ENCODE measurements at regions of chr14 and their contacts with region 1.

Region 1: DNA sequence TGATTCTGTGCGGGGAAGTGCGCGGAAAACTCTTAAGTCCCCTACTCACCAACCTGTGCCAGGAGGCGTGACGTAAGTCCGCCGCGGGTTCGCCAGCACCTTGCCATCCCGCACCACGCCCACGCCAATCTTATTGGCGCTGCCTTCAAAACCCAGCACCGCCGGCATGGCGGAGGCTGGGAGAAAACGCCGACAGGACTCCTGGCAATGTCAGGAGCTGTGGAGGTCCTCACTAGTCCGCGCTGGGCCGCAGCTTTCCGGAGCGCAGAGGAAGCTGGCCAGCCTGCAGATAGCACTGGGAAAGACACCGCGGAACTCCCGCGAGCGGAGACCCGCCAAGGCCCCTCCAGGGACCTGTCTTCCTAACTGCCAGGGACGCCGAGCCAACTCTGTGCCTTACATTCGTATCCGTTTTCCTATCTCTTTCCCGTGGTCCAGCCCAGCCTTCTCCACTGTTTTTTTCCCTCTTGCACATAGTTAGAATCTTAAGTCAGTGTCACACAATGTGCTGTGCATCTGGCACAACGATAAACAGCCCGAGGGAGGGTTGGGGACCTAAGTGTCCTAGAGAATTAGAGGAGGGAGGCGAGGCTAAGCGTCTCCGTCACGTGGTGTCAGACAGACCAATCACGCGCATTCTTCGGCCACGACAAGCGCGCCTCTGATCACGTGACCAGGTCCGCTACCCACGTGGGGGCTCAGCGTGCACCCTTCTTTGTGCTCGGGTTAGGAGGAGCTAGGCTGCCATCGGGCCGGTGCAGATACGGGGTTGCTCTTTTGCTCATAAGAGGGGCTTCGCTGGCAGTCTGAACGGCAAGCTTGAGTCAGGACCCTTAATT is at the starts of genes APEX1 and OSGEP:
- DNase-seq: peak; percentile 93 to 95
- H3K4me3 ChIP-seq: peak within 1 kb of the TSS; percentile 86 to 95 (median 90)
- H3K27ac ChIP-seq: peak within 1 kb of the TSS; percentile 99
- H3K4me1 ChIP-seq: peaks cover 0 to 10% (median 1%) of the 10 kb centered on the region in 4 experiments; a peak in 4 of 7 replicates
- H3K27me3 ChIP-seq: no peaks in the 10 kb centered on the region
- CTCF ChIP-seq: no peak; a peak in 1 of 4 replicates
- EP300 ChIP-seq: no peak
- POLR2A ChIP-seq: peak; percentile 95 to 96
- RAD21 ChIP-seq: peak; percentile 5 to 13; a peak in 2 of 4 replicates
- total RNA-seq, gene APEX1: 384 and 404 TPM in 2 replicates
- total RNA-seq, gene OSGEP: 34.4 and 42.3 TPM in 2 replicates

Region 2: GRCh38 chr14:20327005-20327869 is 127.5 kb before region 1 on chr14:
- CTCF ChIA-PET with region 1: interaction called, 5 read pairs
- POLR2A ChIA-PET with region 1: interaction called, 16 read pairs
- DNase-seq: no peak
- H3K4me3 ChIP-seq: no peak overlapping the region
- H3K27ac ChIP-seq: no peak overlapping the region
- H3K4me1 ChIP-seq: peaks cover 0 to 3% (median 0%) of the 10 kb centered on the region in 4 experiments; a peak in 3 of 7 replicates
- H3K27me3 ChIP-seq: no peaks in the 10 kb centered on the region
- CTCF ChIP-seq: peak in 2 of 3 experiments; percentile 20 to 62; a peak in 2 of 4 replicates
- EP300 ChIP-seq: no peak
- POLR2A ChIP-seq: peak in 1 of 2 experiments; percentile 37; a peak in 1 of 3 replicates
- RAD21 ChIP-seq: peak; percentile 53 to 57

Region 3: DNA sequence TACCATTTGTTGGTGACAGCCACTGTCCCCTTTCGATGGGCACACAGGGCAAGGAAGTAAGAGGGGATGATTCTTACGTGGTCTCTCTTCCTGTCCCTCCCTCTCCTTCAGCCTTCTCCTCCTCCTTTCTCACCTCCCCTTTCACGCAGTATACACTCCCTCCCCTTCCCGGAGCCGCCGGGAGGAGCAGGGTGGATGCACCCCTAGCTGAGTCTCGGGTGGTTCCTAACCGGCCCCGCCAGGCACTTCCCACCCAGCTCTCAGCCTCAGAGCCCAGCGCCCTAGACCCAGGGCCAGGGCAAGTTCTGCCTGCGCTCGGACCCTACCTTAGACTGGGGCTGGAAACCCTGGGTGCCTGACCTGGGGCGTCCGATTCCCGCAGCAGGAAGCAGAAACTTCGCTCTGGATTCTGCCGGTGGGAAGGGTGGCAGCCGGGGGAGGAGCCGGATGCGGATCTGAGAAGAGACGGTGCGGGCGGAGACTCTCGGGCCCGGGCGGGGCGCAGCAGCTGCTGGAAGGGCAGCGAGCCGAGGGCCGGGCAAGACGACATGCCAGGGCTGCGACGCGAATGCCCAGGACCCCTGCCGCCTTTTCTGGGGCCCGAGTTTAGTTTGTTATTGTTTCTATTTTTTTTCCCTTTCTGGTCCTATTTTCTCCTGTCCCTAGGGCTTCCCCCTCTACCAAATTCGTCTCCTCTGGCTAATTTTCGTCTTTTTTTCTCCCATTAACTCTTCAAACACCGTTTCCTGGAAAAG is 41.5 kb before region 1 on chr14 and contains the start of gene TEP1:
- CTCF ChIA-PET with region 1: interaction called, 9 read pairs
- POLR2A ChIA-PET with region 1: interaction called, 23 read pairs
- DNase-seq: peak; percentile 31 to 83
- H3K4me3 ChIP-seq: peak within 1 kb of the TSS; percentile 91 to 97 (median 92)
- H3K27ac ChIP-seq: no peak within 1 kb of the TSS; the same call in 1 of the 2 replicates
- H3K4me1 ChIP-seq: peaks cover 0 to 5% (median 3%) of the 10 kb centered on the region in 4 experiments; a peak in 3 of 7 replicates
- H3K27me3 ChIP-seq: no peaks in the 10 kb centered on the region
- CTCF ChIP-seq: no peak
- EP300 ChIP-seq: no peak
- POLR2A ChIP-seq: peak in 1 of 2 experiments; percentile 57; a peak in 1 of 3 replicates
- RAD21 ChIP-seq: no peak
- total RNA-seq, gene TEP1: 9.6 and 10.7 TPM in 2 replicates

Region 4: GRCh38 chr14:20434701-20435581 is 19.8 kb before region 1 on chr14:
- CTCF ChIA-PET with region 1: no interaction called
- POLR2A ChIA-PET with region 1: interaction called, 68 read pairs
- DNase-seq: peak in 1 of 2 experiments; percentile 61
- H3K4me3 ChIP-seq: peak overlapping the region; percentile 21 to 61 (median 32); a peak in 7 of 8 replicates
- H3K27ac ChIP-seq: no peak overlapping the region
- H3K4me1 ChIP-seq: peaks cover 4 to 10% (median 9%) of the 10 kb centered on the region in 4 experiments; a peak in 6 of 7 replicates
- H3K27me3 ChIP-seq: peaks cover 0 to 20% (median 14%) of the 10 kb centered on the region in 4 experiments; a peak in 5 of 7 replicates
- CTCF ChIP-seq: no peak
- EP300 ChIP-seq: no peak
- POLR2A ChIP-seq: no peak
- RAD21 ChIP-seq: no peak

Region 5: DNA sequence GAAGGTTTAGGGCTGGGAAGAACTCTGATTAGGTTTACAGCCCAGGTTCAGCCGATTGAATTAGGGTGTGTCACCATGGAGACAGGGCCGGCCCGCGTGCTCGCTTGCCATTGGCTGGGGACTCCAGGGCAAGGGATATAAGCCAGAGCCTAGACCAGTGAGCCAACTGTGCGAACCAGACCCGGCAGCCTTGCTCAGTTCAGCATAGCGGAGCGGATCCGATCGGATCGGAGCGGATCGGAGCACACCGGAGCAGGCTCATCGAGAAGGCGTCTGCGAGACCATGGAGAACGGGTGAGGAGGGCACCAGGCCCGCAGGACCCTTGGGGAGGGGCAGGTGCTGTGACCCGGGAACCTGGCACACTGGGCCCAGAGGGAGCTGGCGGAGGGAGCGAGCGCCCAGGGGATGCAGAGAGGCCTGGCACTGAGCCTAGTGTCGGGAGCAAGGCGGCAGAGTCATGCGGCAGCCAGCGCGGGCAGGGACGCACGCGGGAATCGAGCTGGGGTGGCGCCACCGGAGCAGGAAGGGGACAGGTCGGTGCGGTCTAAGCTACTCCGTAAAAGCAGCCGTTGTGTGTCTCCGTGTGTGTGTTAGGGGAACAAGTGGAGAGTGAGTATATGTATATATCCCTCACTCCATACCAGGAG is 14.6 kb after region 1 on chr14 and contains the start of gene PNP:
- CTCF ChIA-PET with region 1: no interaction called
- POLR2A ChIA-PET with region 1: interaction called, 88 read pairs
- DNase-seq: peak; percentile 78 to 96
- H3K4me3 ChIP-seq: peak within 1 kb of the TSS; percentile 85 to 97 (median 90)
- H3K27ac ChIP-seq: peak within 1 kb of the TSS; percentile 63
- H3K4me1 ChIP-seq: peaks cover 0 to 5% (median 2%) of the 10 kb centered on the region in 4 experiments; a peak in 3 of 7 replicates
- H3K27me3 ChIP-seq: no peaks in the 10 kb centered on the region; a peak in 1 of 7 replicates
- CTCF ChIP-seq: no peak
- EP300 ChIP-seq: no peak
- POLR2A ChIP-seq: peak; percentile 99 to 100
- RAD21 ChIP-seq: no peak; a peak in 1 of 4 replicates
- total RNA-seq, gene PNP: 108 and 110 TPM in 2 replicates

Region 6: GRCh38 chr14:20587489-20588154 is 132.9 kb after region 1 on chr14 and contains the start of gene RNASE11:
- CTCF ChIA-PET with region 1: no interaction called
- POLR2A ChIA-PET with region 1: no interaction called
- DNase-seq: peak in 1 of 2 experiments; percentile 8
- H3K4me3 ChIP-seq: no peak within 1 kb of the TSS
- H3K27ac ChIP-seq: no peak within 1 kb of the TSS
- H3K4me1 ChIP-seq: peaks cover 2 to 7% (median 4%) of the 10 kb centered on the region in 4 experiments; a peak in 4 of 7 replicates
- H3K27me3 ChIP-seq: peaks cover 0 to 2% (median 0%) of the 10 kb centered on the region in 4 experiments; a peak in 1 of 7 replicates
- CTCF ChIP-seq: no peak
- EP300 ChIP-seq: no peak
- POLR2A ChIP-seq: no peak
- RAD21 ChIP-seq: no peak
- total RNA-seq, gene RNASE11: not detected in 2 replicates

Region 7: DNA sequence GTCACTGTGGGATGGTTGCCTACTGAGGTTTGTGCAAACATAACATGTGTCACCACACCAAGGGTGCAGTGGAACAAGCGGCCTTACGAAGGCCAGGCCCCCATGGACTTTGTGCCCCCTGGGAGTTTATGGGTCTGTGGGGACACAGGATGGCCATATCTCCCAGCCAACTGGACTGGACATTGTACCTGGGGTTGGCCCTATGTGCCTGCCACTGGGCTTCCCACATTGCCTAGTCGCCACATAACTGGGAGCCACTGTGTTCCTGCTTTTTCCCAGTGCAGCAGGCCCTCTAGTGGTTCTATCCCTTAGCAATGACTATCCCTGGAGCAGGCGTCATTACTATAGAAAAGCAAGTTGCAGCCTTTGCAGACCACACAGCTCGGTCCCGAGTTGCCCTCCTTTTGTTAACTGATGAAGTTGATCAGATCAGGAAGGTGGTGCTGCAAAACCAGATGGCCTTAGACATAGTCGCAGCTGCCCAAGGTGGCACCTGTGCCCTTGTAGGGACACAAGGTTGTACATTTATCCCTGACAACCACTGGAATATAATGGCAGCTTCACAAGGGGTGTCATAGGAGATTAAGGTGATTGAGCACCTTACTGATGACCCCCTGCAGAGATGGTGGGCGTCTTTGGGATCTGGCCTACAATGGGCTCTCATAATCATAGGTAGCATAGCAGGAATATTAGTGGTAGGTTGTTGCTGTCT is 151.6 kb after region 1 on chr14:
- CTCF ChIA-PET with region 1: interaction called, 7 read pairs
- POLR2A ChIA-PET with region 1: interaction called, 11 read pairs
- DNase-seq: peak in 1 of 2 experiments; percentile 72
- H3K4me3 ChIP-seq: no peak overlapping the region
- H3K27ac ChIP-seq: no peak overlapping the region
- H3K4me1 ChIP-seq: peaks cover 0 to 2% (median 0%) of the 10 kb centered on the region in 4 experiments; a peak in 2 of 7 replicates
- H3K27me3 ChIP-seq: no peaks in the 10 kb centered on the region
- CTCF ChIP-seq: peak; percentile 66 to 93 (median 92)
- EP300 ChIP-seq: no peak
- POLR2A ChIP-seq: no peak
- RAD21 ChIP-seq: peak; percentile 97 to 98

Region 8: DNA sequence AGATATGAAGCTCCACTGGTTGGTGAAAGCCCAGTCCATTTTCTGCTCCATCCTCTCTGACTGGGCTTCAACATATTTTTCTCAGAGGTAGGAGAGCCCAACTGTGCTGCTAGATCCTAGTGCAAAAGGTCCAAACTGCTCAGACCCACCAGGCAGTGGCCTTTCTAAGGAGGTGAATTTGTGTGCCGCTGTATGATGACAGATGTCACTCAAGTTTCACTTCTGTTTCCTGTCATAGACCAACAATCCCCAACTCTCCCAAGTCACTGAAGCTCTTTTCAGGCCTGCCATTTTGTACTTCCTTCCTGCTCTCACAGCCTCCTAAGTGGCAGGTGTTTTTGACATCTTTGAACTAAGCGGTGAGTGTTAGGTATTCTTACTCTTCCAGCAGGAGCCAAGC is 213.2 kb after region 1 on chr14:
- CTCF ChIA-PET with region 1: no interaction called
- POLR2A ChIA-PET with region 1: no interaction called
- DNase-seq: no peak
- H3K4me3 ChIP-seq: no peak overlapping the region
- H3K27ac ChIP-seq: no peak overlapping the region
- H3K4me1 ChIP-seq: no peaks in the 10 kb centered on the region; a peak in 2 of 7 replicates
- H3K27me3 ChIP-seq: peaks cover 0 to 3% (median 0%) of the 10 kb centered on the region in 4 experiments; a peak in 1 of 7 replicates
- CTCF ChIP-seq: no peak
- EP300 ChIP-seq: no peak
- POLR2A ChIP-seq: no peak
- RAD21 ChIP-seq: no peak

Measured in H1 (cell line).